Activated naive CD4-positive, alpha-beta T cell treated with anti-CD3 and anti-CD28 coated beads for 36 hours (primary cell): ENCODE measurements at regions of chr2 and their contacts with region 1.

Region 1: GRCh38 chr2:3179208-3179607 is 198.4 kb downstream of the EIPR1 start:
- DNase-seq: peak; percentile 60
- H3K4me3 Mint-ChIP-seq: no peak overlapping the region
- H3K27ac Mint-ChIP-seq: no peak overlapping the region
- H3K4me1 Mint-ChIP-seq: no peaks in the 10 kb centered on the region
- H3K27me3 Mint-ChIP-seq: no peaks in the 10 kb centered on the region

Region 2: DNA sequence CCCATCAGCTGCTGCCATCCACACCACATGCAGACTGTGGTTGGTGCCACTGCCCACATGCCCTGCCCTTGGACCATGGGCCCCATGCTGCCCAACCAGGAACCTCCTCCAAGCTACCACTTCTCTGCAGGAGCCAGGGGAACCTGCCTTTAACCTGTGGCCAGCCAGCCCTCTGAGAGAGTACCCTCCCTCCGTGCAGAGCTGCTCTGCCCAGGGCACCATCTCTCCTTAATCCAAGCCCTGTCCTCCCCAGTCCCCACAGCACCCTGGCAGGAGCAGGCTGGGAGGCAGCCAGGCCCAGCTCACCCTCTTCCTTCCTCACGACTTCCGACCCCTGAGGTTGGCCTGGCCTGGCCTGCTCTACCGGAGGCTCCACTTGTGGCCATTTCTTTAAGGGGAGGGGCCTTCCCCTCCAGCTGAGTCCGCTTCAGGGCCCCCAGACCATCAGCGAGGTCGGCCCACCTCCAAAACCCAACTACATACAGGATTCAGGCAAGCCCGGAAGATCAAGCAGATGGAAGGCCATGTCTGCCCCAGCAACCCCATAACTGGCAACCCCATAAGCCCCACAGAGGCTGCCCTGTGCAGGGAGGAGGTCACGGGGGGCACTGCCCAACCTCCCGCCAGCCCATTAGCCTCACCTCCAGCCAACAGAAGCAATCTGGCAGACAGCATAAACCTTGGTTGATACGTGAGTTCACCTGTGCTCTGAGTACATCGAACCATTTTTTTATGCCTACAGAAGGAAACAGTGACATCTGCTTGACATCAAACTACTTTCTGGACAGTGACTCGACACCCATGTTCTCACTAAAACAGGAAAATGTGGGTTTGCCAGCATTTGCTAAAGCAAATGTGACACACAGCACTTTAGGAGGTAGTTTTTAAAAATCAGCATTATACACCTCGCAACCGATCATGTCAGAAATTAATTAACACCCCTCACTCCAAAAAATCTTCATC is 99.3 kb after region 1 on chr2:
- CTCF ChIA-PET with region 1: no interaction called
- intact Hi-C with region 1: loop called (anchors 1 kb)
- DNase-seq: no peak
- H3K4me3 Mint-ChIP-seq: no peak overlapping the region
- H3K27ac Mint-ChIP-seq: peak overlapping the region; percentile 30
- H3K4me1 Mint-ChIP-seq: peaks cover 10% of the 10 kb centered on the region
- H3K27me3 Mint-ChIP-seq: no peaks in the 10 kb centered on the region